Activated CD8-positive, alpha-beta memory T cell treated with anti-CD3 and anti-CD28 coated beads, Interleukin-2, amount 10 ng/mL, durations not matched to agents 7 days and 5 days (primary cell): ENCODE measurements at regions of chr2 and their contacts with region 1.

Region 1: DNA sequence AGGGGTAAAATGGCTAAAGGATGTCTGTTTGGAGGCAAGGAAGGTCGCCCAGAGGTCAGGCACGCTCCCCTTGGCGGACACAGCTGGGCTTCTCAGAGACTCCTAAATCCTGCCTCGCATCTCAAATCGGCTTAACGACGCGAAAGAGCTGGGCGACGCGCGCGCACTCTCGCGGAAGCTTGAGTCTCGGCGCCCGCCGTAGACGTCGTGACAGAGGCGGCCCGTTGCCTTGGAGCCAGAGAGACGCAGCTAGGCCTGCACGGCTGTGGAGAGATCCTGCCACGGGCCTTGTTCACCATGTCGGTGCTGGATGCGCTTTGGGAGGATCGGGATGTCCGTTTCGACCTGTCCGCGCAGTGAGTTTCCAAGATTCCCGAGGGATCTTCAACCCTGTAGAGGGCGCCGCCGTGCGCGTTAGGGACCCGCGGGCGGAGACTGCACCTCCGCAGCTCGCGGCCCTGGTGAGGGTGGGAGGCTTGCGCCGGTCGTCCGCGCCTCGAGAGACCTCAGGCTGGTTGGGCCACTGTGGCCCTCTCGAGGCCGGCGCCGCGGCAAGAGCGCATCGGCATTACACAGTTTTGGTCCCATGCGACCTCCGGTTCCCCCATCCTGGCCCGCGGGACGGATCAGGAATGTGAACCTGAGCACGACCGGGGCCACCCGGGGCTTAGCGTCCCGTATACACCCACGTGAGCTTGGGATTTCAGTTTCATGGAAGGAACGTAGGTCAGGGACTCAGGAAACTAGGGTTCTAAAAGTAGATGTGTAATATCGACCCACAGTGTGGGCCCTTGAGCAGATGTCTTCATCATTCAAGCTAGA is at the start of gene BBS5:
- DNase-seq: peak; percentile 88
- ATAC-seq: peak; percentile 98
- H3K4me3 Mint-ChIP-seq: peak within 1 kb of the TSS; percentile 91
- H3K27ac Mint-ChIP-seq: peak within 1 kb of the TSS; percentile 54
- H3K4me1 Mint-ChIP-seq: peaks cover 15% of the 10 kb centered on the region
- H3K27me3 Mint-ChIP-seq: no peaks in the 10 kb centered on the region
- total RNA-seq, gene BBS5: 1.3 to 1.9 TPM

Region 2: GRCh38 chr2:169452080-169452479 is 27.4 kb before region 1 on chr2:
- CTCF ChIA-PET with region 1: no interaction called
- DNase-seq: no peak
- ATAC-seq: no peak
- H3K4me3 Mint-ChIP-seq: no peak overlapping the region
- H3K27ac Mint-ChIP-seq: no peak overlapping the region
- H3K4me1 Mint-ChIP-seq: no peaks in the 10 kb centered on the region
- H3K27me3 Mint-ChIP-seq: peaks cover 14% of the 10 kb centered on the region

Region 3: DNA sequence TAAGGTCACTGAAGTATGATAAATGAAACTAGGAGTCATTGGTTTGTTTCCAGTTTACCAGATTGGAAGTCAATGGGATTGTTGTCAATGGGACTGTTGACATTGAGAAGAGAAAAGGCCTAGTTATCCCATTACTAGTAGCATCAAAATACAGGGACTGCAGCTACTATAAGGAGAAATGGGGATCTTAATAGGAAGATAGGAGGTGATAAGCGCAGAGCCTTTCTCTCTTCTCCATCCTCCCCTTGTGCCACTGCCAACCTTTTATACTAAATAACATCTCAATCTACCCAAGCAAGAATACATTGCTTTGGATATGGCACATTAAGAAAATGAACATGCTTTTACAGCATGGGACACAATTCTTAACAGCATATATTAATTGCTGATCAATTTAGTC is 10.6 kb before region 1 on chr2:
- CTCF ChIA-PET with region 1: interaction called, 10 read pairs
- DNase-seq: no peak
- ATAC-seq: peak; percentile 26
- H3K4me3 Mint-ChIP-seq: no peak overlapping the region
- H3K27ac Mint-ChIP-seq: no peak overlapping the region
- H3K4me1 Mint-ChIP-seq: no peaks in the 10 kb centered on the region
- H3K27me3 Mint-ChIP-seq: peaks cover 2% of the 10 kb centered on the region